ENCODE measurements at regions of chr1 and their contacts with region 1.

Region 1: DNA sequence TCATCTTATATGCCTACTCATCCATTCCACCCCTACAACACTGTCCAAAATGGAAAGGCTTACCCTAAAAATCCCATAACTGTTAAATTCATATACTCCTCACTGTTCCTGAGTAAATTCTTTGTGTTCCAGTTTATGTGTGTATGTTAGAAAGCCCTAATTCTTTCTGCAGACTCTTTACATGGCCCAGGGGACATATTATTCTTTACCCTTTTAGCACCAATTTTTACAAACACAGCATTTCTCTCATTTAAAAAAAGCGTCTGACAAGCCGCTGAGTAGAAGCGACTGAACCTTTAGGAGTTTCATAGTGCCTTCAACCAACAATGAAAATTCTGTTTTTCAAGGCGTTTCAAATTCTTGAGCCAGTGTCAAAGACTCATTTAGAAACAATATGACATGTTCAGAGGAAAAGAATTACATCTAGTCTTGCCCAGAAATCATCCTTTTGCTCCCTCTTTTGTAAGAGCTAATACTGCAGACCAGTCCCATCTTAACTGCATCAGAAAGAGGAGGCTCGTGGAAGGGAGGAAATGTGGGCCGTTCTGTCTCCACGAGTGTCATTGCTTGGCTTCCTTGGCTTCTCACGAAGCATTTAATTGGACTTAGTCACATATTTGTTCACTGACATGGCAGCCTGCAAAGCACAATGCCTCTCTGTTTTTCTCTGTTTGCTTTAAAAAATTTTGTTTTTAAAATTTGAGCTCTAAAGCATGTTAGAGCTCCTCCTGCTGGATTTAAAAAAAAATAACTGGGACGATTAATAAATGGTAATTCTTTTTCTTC is 21.3 kb upstream of the C1orf105 start:
- DNase-seq: peak in 5 of 9 experiments; percentile 16 to 62 (median 47)
- ATAC-seq: peak; percentile 54
- H3K4me3 ChIP-seq: no peak overlapping the region
- H3K4me3 Mint-ChIP-seq: peak overlapping the region; percentile 63
- H3K27ac ChIP-seq: no peak overlapping the region
- H3K27ac Mint-ChIP-seq: peak overlapping the region; percentile 86
- H3K4me1 ChIP-seq: peaks cover 49% of the 10 kb centered on the region
- H3K4me1 Mint-ChIP-seq: peaks cover 68% of the 10 kb centered on the region
- H3K27me3 ChIP-seq: no peaks in the 10 kb centered on the region
- H3K27me3 Mint-ChIP-seq: no peaks in the 10 kb centered on the region
- CTCF ChIP-seq: peak; percentile 78

Region 2: DNA sequence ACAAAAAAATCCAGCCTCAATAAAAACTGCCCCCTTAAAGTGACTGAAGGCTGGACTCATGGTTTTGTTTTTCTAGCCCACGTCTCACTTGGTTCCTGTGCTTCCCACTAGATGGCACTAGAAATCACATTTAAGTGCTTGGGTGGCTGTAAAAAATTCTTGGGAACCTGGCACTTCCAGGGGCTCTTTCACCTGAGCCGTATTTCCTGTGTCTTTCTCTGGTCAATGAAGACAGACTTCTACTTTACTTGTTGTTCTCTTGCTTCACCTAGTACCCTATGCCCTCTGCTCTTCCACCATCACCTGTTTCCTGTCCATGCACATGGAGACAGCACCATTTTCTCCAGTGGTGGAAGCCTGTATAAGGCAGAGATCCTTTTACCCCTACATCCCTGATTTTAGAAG is 597.7 kb before region 1 on chr1:
- CTCF ChIA-PET with region 1: interaction called, 9 read pairs
- POLR2A ChIA-PET with region 1: no interaction called
- intact Hi-C with region 1: loop called (anchors 10 kb)
- DNase-seq: peak in 2 of 9 experiments; percentile 43 to 52
- ATAC-seq: no peak
- H3K4me3 ChIP-seq: no peak overlapping the region
- H3K4me3 Mint-ChIP-seq: no peak overlapping the region
- H3K27ac ChIP-seq: no peak overlapping the region
- H3K27ac Mint-ChIP-seq: no peak overlapping the region
- H3K4me1 ChIP-seq: no peaks in the 10 kb centered on the region
- H3K4me1 Mint-ChIP-seq: peaks cover 6% of the 10 kb centered on the region
- H3K27me3 ChIP-seq: no peaks in the 10 kb centered on the region
- H3K27me3 Mint-ChIP-seq: no peaks in the 10 kb centered on the region
- CTCF ChIP-seq: peak; percentile 66

Region 3: DNA sequence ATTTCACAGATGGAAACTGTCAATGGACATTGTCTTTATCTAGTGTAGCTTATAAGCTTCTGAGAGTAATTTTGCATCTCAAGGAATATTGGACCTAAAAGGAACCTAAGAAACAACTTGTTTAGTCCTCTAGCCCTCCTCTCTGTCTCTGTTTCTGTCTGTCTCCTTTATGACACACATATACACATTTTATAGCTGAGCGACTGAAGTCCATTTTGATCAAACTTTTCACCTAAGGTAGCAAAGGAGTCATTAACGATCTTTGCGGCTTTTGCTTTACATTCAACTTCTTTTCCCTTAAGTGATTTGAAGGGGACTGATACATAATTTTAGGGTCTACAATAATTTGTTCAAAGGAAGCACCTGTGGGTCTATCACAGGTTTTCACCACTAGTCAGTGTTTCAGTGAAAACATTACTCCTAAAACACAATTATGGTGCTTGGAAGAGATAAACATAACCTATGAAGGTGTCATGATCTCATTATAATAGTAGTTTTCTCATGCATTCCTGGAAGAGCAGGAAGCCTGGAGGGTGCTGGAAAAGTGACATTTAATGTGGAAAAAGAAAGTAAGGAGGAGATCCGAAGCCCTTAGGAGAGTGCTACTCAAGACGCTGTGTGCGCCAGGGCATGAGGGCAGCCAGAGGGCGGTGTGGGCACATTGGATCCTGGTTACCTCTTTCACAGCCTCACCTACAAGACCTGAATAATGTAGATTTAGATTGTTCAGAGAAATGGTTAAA is 309.2 kb before region 1 on chr1:
- CTCF ChIA-PET with region 1: interaction called, 30 read pairs
- POLR2A ChIA-PET with region 1: interaction called, 3 read pairs
- intact Hi-C with region 1: loop called (anchors 1 kb)
- DNase-seq: peak; percentile 13 to 74 (median 54)
- ATAC-seq: peak; percentile 84
- H3K4me3 ChIP-seq: no peak overlapping the region
- H3K4me3 Mint-ChIP-seq: no peak overlapping the region
- H3K27ac ChIP-seq: no peak overlapping the region
- H3K27ac Mint-ChIP-seq: no peak overlapping the region
- H3K4me1 ChIP-seq: peaks cover 4% of the 10 kb centered on the region
- H3K4me1 Mint-ChIP-seq: peaks cover 4% of the 10 kb centered on the region
- H3K27me3 ChIP-seq: no peaks in the 10 kb centered on the region
- H3K27me3 Mint-ChIP-seq: no peaks in the 10 kb centered on the region
- CTCF ChIP-seq: peak; percentile 66

Region 4: GRCh38 chr1:172180501-172181285 is 218.5 kb before region 1 on chr1:
- CTCF ChIA-PET with region 1: interaction called, 7 read pairs
- POLR2A ChIA-PET with region 1: interaction called, 3 read pairs
- intact Hi-C with region 1: loop called in 1 of 2 experiments (anchors 5 kb)
- DNase-seq: peak in 7 of 9 experiments; percentile 13 to 73 (median 44)
- ATAC-seq: peak; percentile 66
- H3K4me3 ChIP-seq: peak overlapping the region; percentile 17 to 37
- H3K4me3 Mint-ChIP-seq: peak overlapping the region; percentile 76
- H3K27ac ChIP-seq: peak overlapping the region; percentile 46 to 87
- H3K27ac Mint-ChIP-seq: peak overlapping the region; percentile 96
- H3K4me1 ChIP-seq: peaks cover 24% of the 10 kb centered on the region
- H3K4me1 Mint-ChIP-seq: peaks cover 37% of the 10 kb centered on the region
- H3K27me3 ChIP-seq: no peaks in the 10 kb centered on the region
- H3K27me3 Mint-ChIP-seq: no peaks in the 10 kb centered on the region
- CTCF ChIP-seq: no peak

Region 5: GRCh38 chr1:172229942-172230341 is 169.2 kb before region 1 on chr1:
- CTCF ChIA-PET with region 1: no interaction called
- POLR2A ChIA-PET with region 1: no interaction called
- intact Hi-C with region 1: no loop called
- DNase-seq: no peak
- ATAC-seq: no peak
- H3K4me3 ChIP-seq: no peak overlapping the region
- H3K4me3 Mint-ChIP-seq: no peak overlapping the region
- H3K27ac ChIP-seq: no peak overlapping the region
- H3K27ac Mint-ChIP-seq: no peak overlapping the region
- H3K4me1 ChIP-seq: no peaks in the 10 kb centered on the region
- H3K4me1 Mint-ChIP-seq: peaks cover 5% of the 10 kb centered on the region
- H3K27me3 ChIP-seq: no peaks in the 10 kb centered on the region
- H3K27me3 Mint-ChIP-seq: no peaks in the 10 kb centered on the region
- CTCF ChIP-seq: no peak

Region 6: GRCh38 chr1:172380441-172381244 is 18.5 kb before region 1 on chr1:
- CTCF ChIA-PET with region 1: interaction called, 12 read pairs
- POLR2A ChIA-PET with region 1: interaction called, 9 read pairs
- intact Hi-C with region 1: loop called in 1 of 2 experiments (anchors 1 kb)
- DNase-seq: peak in 6 of 9 experiments; percentile 17 to 83 (median 43)
- ATAC-seq: peak; percentile 95
- H3K4me3 ChIP-seq: peak overlapping the region; percentile 22 to 25
- H3K4me3 Mint-ChIP-seq: peak overlapping the region; percentile 80
- H3K27ac ChIP-seq: peak overlapping the region; percentile 14 to 84
- H3K27ac Mint-ChIP-seq: peak overlapping the region; percentile 97
- H3K4me1 ChIP-seq: peaks cover 14% of the 10 kb centered on the region
- H3K4me1 Mint-ChIP-seq: peaks cover 39% of the 10 kb centered on the region
- H3K27me3 ChIP-seq: no peaks in the 10 kb centered on the region
- H3K27me3 Mint-ChIP-seq: no peaks in the 10 kb centered on the region
- CTCF ChIP-seq: no peak

Region 7: GRCh38 chr1:172429331-172430127 is 30.4 kb after region 1 on chr1:
- CTCF ChIA-PET with region 1: interaction called, 10 read pairs
- POLR2A ChIA-PET with region 1: interaction called, 4 read pairs
- intact Hi-C with region 1: loop called in 1 of 2 experiments (anchors 2 kb)
- DNase-seq: peak in 6 of 9 experiments; percentile 22 to 80 (median 47)
- ATAC-seq: peak; percentile 75
- H3K4me3 ChIP-seq: no peak overlapping the region
- H3K4me3 Mint-ChIP-seq: no peak overlapping the region
- H3K27ac ChIP-seq: no peak overlapping the region
- H3K27ac Mint-ChIP-seq: peak overlapping the region; percentile 7
- H3K4me1 ChIP-seq: peaks cover 51% of the 10 kb centered on the region
- H3K4me1 Mint-ChIP-seq: peaks cover 49% of the 10 kb centered on the region
- H3K27me3 ChIP-seq: no peaks in the 10 kb centered on the region
- H3K27me3 Mint-ChIP-seq: no peaks in the 10 kb centered on the region
- CTCF ChIP-seq: peak; percentile 82